Endothelial cell of umbilical vein (primary cell): ENCODE measurements at regions of chr17 and their contacts with region 1.

Region 1: GRCh38 chr17:17900615-17901520 is 64.1 kb upstream of the SREBF1 start:
- DNase-seq: peak; percentile 89
- H3K4me3 ChIP-seq: no peak overlapping the region
- H3K27ac ChIP-seq: no peak overlapping the region
- H3K4me1 ChIP-seq: peaks cover 17% of the 10 kb centered on the region
- H3K27me3 ChIP-seq: no peaks in the 10 kb centered on the region
- CTCF ChIP-seq: no peak
- POLR2A ChIP-seq: no peak

Region 2: DNA sequence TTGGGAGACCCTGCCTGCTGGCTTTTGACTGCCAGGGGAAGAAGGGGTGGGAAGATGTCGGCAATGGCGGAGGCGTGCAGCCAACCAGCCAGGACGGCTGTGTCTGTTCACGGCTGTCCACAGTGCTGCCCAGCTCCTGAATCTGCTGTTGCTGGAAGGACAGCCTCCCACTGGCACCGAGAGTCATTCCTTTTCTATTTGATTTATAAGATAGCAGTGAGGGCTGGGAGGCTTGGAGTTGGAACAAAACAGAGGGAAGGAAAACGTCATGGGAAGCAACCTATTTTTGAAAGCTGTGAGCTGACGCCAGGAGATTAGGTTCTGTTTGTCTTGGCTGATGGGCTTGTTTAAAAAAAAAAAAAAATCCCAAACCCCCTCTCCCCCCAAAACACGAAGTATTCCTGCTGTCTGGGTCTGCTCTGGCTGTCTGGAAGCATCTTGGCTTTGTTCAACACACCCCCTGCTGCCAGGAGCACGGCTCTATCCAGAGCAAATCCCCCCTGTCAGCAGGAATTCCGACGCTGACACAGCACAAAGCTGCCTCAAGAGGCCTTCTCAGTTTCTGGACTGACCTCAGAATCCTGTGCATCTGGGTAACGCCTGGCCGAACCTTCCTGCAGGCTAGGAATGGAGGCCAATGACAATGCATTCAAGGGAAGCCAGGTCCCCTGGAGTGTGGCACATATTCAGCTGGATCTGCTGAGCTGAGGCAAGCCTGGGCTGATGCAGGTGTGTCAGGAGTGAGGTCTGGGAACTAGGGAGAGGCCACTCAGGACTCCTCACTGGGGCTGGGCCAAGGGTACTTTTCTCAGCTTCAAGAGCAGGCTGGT is 23.1 kb before region 1 on chr17:
- CTCF ChIA-PET with region 1: interaction called, 12 read pairs
- POLR2A ChIA-PET with region 1: no interaction called
- dilution Hi-C with region 1: no loop called
- intact Hi-C with region 1: no loop called
- DNase-seq: peak; percentile 98
- H3K4me3 ChIP-seq: peak overlapping the region in 1 of 3 experiments; percentile 4
- H3K27ac ChIP-seq: peak overlapping the region; percentile 81
- H3K4me1 ChIP-seq: peaks cover 29% of the 10 kb centered on the region
- H3K27me3 ChIP-seq: no peaks in the 10 kb centered on the region
- CTCF ChIP-seq: peak in 1 of 2 donors; percentile 23
- POLR2A ChIP-seq: peak; percentile 20

Region 3: GRCh38 chr17:17913695-17914332 is 12.9 kb after region 1 on chr17:
- CTCF ChIA-PET with region 1: interaction called, 44 read pairs
- POLR2A ChIA-PET with region 1: no interaction called
- dilution Hi-C with region 1: no loop called
- intact Hi-C with region 1: loop called (anchors 2 kb)
- DNase-seq: peak; percentile 83
- H3K4me3 ChIP-seq: no peak overlapping the region
- H3K27ac ChIP-seq: no peak overlapping the region
- H3K4me1 ChIP-seq: peaks cover 11% of the 10 kb centered on the region
- H3K27me3 ChIP-seq: no peaks in the 10 kb centered on the region
- CTCF ChIP-seq: no peak
- POLR2A ChIP-seq: no peak